ENCODE measurements at regions of chr5 and their contacts with region 1.

Region 1: DNA sequence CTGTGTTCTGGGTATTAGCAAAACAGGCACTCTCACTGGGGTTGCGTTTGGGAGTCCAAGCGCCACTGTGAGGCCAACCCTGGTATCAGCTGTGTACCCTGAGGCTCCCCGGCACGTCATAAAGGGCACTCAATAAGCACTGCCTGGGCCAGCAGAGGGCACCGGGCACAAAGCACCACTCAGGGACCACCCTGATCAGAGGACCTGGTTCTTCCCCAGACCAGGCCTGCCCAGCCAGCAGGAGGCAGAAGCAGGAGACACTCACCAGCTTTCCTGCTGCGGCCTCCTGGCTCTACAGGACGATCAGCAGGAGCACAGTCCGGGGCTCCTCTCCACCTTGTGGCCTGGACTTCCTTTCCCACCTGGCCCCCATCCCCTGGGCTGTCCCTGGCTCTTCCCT is 12.6 kb downstream of the MGAT1 start:
- DNase-seq: no peak
- ATAC-seq: no peak
- H3K4me3 ChIP-seq: no peak overlapping the region
- H3K27ac ChIP-seq: no peak overlapping the region
- H3K4me1 ChIP-seq: peaks cover 4 to 72% (median 47%) of the 10 kb centered on the region in 12 donors
- H3K27me3 ChIP-seq: no peaks in the 10 kb centered on the region
- CTCF ChIP-seq: peak in 2 of 12 donors; percentile 7 to 8
- POLR2A ChIP-seq: no peak

Region 2: GRCh38 chr5:180683220-180683922 is 106.6 kb before region 1 on chr5:
- intact Hi-C with region 1: no loop called
- DNase-seq: no peak
- ATAC-seq: no peak
- H3K4me3 ChIP-seq: no peak overlapping the region
- H3K27ac ChIP-seq: no peak overlapping the region
- H3K4me1 ChIP-seq: no peaks in the 10 kb centered on the region
- H3K27me3 ChIP-seq: peaks cover 0 to 60% (median 7%) of the 10 kb centered on the region in 9 donors
- CTCF ChIP-seq: no peak
- POLR2A ChIP-seq: no peak

Region 3: GRCh38 chr5:180831139-180832048 is 41.4 kb after region 1 on chr5:
- intact Hi-C with region 1: loop called in 2 of 10 experiments (anchors 5 kb)
- DNase-seq: peak; percentile 91 to 93 (median 93)
- ATAC-seq: peak; percentile 95 to 98 (median 98)
- H3K4me3 ChIP-seq: peak overlapping the region; percentile 67 to 100 (median 87)
- H3K27ac ChIP-seq: peak overlapping the region; percentile 94 to 100 (median 98)
- H3K4me1 ChIP-seq: peaks cover 0 to 56% (median 27%) of the 10 kb centered on the region in 12 donors
- H3K27me3 ChIP-seq: no peaks in the 10 kb centered on the region
- CTCF ChIP-seq: peak in 7 of 12 donors; percentile 13 to 49 (median 36)
- POLR2A ChIP-seq: peak; percentile 45 to 74

Measured in heart left ventricle (tissue), 16 donors.